ENCODE measurements at regions of chr19 and their contacts with region 1.

Region 1: DNA sequence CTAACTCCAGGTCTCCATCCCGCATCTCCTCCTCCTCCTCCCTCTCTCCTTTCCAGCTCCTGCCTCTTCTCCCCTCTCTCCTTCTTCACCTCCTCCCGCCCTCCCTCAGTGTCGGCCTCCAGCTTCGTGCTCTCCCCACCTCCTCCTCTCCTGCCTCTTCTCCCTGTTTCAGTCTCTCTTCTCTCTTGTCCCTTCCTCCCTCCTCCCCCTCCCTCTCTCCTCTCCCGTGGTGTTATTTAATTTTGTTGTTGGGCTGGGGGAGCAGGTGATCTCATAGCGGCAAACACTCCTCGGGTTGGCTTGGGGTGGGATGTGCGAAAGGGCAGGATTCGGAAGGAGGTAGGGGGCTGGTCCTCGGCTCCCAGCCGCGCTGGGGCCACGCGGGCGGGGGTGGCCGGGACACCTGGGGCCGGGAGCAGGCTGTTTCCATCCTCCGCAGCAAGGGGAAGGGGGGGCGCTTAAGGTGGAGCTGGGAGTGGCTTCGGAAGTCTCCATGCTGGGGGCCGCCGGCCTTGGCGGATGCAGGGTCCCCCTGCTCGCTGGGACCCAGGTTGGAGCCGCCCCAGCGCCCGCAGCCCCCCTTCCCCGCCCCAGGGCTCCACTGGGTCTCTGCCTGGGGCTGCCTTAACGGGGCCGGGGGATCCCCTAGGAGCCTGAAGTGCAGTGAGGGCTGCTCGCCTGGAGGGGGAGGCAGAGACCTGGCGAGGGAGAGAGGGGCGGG is at the start of gene CA11:
- H3K4me3 ChIP-seq: peak within 1 kb of the TSS; percentile 44
- H3K27ac ChIP-seq: peak within 1 kb of the TSS; percentile 70
- H3K4me1 ChIP-seq: peaks cover 9% of the 10 kb centered on the region
- CTCF ChIP-seq: peak; percentile 96

Region 2: DNA sequence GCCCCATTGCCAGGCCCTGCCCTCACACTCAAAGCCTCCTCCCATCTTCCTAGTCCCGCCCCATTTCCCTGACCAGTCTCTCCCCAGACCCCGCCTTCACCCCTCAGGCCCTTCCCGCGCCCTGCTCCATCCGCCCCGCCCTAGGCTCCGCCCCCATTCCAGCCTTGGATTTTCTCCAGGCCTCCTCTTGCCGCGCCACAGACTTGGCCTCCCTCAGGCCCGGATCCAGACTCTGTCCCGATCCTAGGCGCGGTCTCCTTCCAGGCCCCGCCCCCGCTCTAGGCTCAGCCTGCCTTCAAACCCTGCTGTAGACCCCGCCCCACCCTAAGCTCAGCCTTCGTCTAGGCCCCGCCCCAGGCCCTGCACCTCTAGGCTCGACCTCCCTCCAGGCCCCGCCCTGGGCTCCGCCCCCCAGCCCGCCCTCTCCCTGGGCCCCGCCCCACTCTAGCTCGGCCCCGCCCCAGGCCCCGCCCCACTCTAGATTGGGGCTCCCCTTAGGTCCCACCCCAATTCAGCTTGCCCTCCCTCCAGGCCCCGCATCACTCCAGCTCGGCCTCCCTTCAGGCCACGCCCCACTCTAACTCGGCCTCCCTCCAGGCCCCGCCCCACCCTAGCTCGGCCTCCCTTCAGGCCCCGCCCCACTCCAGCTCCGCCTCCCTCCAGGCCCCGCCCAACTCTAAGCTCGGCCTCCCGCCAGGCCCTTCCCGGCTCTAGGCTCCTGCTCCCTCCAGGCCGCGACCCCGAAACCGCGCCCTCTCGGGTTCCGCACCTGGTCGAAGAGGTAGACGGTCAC is 153.0 kb before region 1 on chr19:
- CTCF ChIA-PET with region 1: no interaction called
- POLR2A ChIA-PET with region 1: no interaction called
- H3K4me3 ChIP-seq: peak overlapping the region; percentile 23
- H3K27ac ChIP-seq: no peak overlapping the region
- H3K4me1 ChIP-seq: peaks cover 6% of the 10 kb centered on the region
- CTCF ChIP-seq: no peak

Region 3: DNA sequence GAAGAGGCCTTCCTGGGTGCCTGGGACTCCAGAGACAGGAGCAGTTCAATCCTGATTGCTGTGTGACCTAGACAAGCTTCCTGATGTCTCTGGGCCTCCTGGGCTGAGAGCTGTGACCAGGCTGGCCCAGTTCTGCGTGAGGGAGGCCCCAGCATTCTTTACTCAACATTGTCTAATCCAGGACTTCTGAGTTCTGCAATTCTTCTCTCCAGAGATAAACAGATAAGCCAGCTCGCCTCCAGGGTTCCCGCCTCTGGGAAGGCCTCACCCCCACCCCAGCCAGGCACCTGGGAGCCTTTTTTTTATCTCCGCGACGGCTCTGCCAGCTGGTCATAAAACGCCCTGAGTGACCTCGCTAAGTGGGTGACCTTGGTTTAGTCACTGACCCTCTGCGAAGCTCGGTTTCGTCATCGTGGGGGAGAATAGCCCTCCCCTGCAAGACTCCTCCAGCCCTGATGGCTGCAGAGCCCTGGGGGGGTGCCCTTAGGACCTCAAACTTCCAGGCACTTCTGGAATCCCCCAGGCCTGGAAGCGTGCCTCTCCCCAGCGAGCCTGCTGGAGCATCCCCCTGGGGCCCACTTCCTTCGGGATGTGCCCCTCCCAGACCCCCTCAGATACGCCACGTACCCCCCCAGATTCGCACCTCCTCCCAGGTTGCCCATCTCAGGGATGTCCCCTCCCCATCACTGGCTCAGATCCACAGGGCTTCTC is 92.3 kb before region 1 on chr19:
- CTCF ChIA-PET with region 1: no interaction called
- POLR2A ChIA-PET with region 1: no interaction called
- H3K4me3 ChIP-seq: no peak overlapping the region
- H3K27ac ChIP-seq: no peak overlapping the region
- H3K4me1 ChIP-seq: peaks cover 3% of the 10 kb centered on the region; the same call in 1 of the 2 replicates
- CTCF ChIP-seq: no peak

Region 4: GRCh38 chr19:48656840-48657474 is 10.8 kb after region 1 on chr19:
- CTCF ChIA-PET with region 1: interaction called, 20 read pairs
- POLR2A ChIA-PET with region 1: interaction called, 5 read pairs
- H3K4me3 ChIP-seq: no peak overlapping the region
- H3K27ac ChIP-seq: no peak overlapping the region
- H3K4me1 ChIP-seq: peaks cover 9% of the 10 kb centered on the region
- CTCF ChIP-seq: no peak

Measured in HEK293 (cell line).